Activated CD8-positive, alpha-beta T cell treated with anti-CD3 and anti-CD28 coated beads for 36 hours (primary cell): ENCODE measurements at regions of chr14 and their contacts with region 1.

Region 1: GRCh38 chr14:60164712-60165546 is at the start of gene DHRS7:
- DNase-seq: peak; percentile 73
- ATAC-seq: peak; percentile 86
- H3K4me3 Mint-ChIP-seq: peak within 1 kb of the TSS; percentile 88
- H3K27ac Mint-ChIP-seq: peak within 1 kb of the TSS; percentile 96
- H3K4me1 Mint-ChIP-seq: peaks cover 37% of the 10 kb centered on the region
- H3K27me3 Mint-ChIP-seq: no peaks in the 10 kb centered on the region
- CTCF ChIP-seq: no peak
- total RNA-seq, gene DHRS7: 46.4 to 46.6 TPM

Region 2: GRCh38 chr14:60091550-60092530 is 73.1 kb before region 1 on chr14 and contains the start of gene PCNX4:
- CTCF ChIA-PET with region 1: interaction called, 3 read pairs
- POLR2A ChIA-PET with region 1: interaction called, 7 read pairs
- intact Hi-C with region 1: loop called (anchors 5 kb)
- DNase-seq: peak; percentile 97
- ATAC-seq: peak; percentile 93
- H3K4me3 Mint-ChIP-seq: peak within 1 kb of the TSS; percentile 100
- H3K27ac Mint-ChIP-seq: peak within 1 kb of the TSS; percentile 98
- H3K4me1 Mint-ChIP-seq: peaks cover 30% of the 10 kb centered on the region
- H3K27me3 Mint-ChIP-seq: no peaks in the 10 kb centered on the region
- CTCF ChIP-seq: no peak
- total RNA-seq, gene PCNX4: 28.2 to 30.0 TPM

Region 3: GRCh38 chr14:60125918-60126317 is 39.0 kb before region 1 on chr14:
- CTCF ChIA-PET with region 1: no interaction called
- POLR2A ChIA-PET with region 1: no interaction called
- intact Hi-C with region 1: no loop called
- DNase-seq: no peak
- ATAC-seq: no peak
- H3K4me3 Mint-ChIP-seq: no peak overlapping the region
- H3K27ac Mint-ChIP-seq: no peak overlapping the region
- H3K4me1 Mint-ChIP-seq: no peaks in the 10 kb centered on the region
- H3K27me3 Mint-ChIP-seq: no peaks in the 10 kb centered on the region
- CTCF ChIP-seq: no peak

Region 4: GRCh38 chr14:60151715-60152114 is 13.2 kb before region 1 on chr14:
- CTCF ChIA-PET with region 1: interaction called, 5 read pairs
- POLR2A ChIA-PET with region 1: interaction called, 15 read pairs
- intact Hi-C with region 1: no loop called
- DNase-seq: peak; percentile 86
- ATAC-seq: peak; percentile 98
- H3K4me3 Mint-ChIP-seq: no peak overlapping the region
- H3K27ac Mint-ChIP-seq: peak overlapping the region; percentile 85
- H3K4me1 Mint-ChIP-seq: peaks cover 41% of the 10 kb centered on the region
- H3K27me3 Mint-ChIP-seq: no peaks in the 10 kb centered on the region
- CTCF ChIP-seq: no peak

Region 5: GRCh38 chr14:60175246-60175902 is 10.4 kb after region 1 on chr14:
- CTCF ChIA-PET with region 1: interaction called, 5 read pairs
- POLR2A ChIA-PET with region 1: interaction called, 10 read pairs
- intact Hi-C with region 1: no loop called
- DNase-seq: no peak
- ATAC-seq: no peak
- H3K4me3 Mint-ChIP-seq: no peak overlapping the region
- H3K27ac Mint-ChIP-seq: no peak overlapping the region
- H3K4me1 Mint-ChIP-seq: no peaks in the 10 kb centered on the region
- H3K27me3 Mint-ChIP-seq: no peaks in the 10 kb centered on the region
- CTCF ChIP-seq: no peak

Region 6: GRCh38 chr14:60248697-60249318 is 83.9 kb after region 1 on chr14 and contains the start of gene PPM1A:
- CTCF ChIA-PET with region 1: interaction called, 3 read pairs
- POLR2A ChIA-PET with region 1: interaction called, 11 read pairs
- intact Hi-C with region 1: no loop called
- DNase-seq: peak; percentile 96
- ATAC-seq: peak; percentile 76
- H3K4me3 Mint-ChIP-seq: peak within 1 kb of the TSS; percentile 90
- H3K27ac Mint-ChIP-seq: peak within 1 kb of the TSS; percentile 100
- H3K4me1 Mint-ChIP-seq: peaks cover 52% of the 10 kb centered on the region
- H3K27me3 Mint-ChIP-seq: no peaks in the 10 kb centered on the region
- CTCF ChIP-seq: no peak
- total RNA-seq, gene PPM1A: 40.0 to 40.5 TPM